GM12878 (cell line): ENCODE measurements at regions of chr11 and their contacts with region 1.

Region 1: DNA sequence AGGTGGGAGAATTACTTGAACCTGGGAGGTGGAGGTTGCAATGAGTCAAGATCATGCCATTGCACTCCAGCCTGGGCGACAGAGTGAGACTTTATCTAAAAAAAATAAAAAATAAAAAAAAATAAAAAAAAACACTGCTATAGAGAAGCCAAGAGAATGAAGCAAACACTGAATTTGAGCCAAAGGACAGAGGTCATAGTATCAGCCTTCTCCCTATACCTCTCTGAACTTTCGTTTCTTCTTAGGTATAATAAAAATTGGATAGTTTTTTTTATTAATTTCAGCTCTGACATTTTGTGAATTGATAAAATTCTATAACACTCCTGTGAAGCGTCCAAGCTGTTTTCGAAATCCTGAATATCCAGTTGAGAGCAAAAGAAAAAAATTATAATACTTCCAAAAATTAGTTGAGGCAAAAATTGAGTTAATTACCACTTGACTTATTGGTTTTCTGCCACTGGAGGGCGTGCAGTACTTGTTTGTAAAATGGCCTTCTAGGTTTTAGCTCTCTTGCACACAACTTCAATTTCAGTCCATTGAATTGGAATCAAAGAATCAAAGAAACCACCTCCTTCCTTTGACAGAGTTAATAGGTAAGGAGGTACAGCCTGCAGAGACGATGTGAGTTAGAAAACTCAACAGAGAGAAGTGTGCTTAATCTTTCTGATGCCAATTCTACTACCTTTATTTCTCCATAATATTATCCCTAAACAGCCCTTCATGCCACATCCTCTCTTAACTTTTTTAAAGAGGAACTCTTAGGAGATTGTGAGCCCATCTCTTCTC is 143.2 kb downstream of the BBOX1 start:
- DNase-seq: peak; percentile 12
- ATAC-seq: peak; percentile 80
- H3K4me3 ChIP-seq: no peak overlapping the region
- H3K27ac ChIP-seq: no peak overlapping the region
- H3K4me1 ChIP-seq: no peaks in the 10 kb centered on the region
- H3K27me3 ChIP-seq: no peaks in the 10 kb centered on the region
- CTCF ChIP-seq: peak; percentile 57 to 76 (median 59)
- EP300 ChIP-seq: no peak
- POLR2A ChIP-seq: no peak
- RAD21 ChIP-seq: peak; percentile 91

Region 2: DNA sequence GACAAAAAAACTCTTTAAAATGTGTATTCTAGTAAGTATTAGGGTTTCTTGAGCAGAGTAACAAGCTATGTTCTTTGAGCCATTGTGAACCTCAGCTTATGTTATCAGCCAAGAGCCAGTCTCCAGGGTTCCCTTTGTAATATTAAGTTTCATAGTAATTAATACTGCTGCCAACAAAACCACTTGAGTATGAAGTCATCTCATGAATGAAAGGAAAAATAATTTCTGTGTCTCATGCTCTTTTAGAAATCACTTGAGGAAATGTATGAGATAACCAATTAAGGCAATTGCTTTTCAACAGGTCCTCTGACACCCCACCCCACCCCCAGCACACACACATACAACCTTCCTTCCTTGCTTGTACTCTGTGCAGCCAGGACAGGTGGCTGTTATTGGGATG is 83.3 kb before region 1 on chr11:
- CTCF ChIA-PET with region 1: no interaction called
- POLR2A ChIA-PET with region 1: no interaction called
- RAD21 ChIA-PET with region 1: no interaction called
- SMC1A ChIA-PET with region 1: no interaction called
- in situ Hi-C with region 1: no loop called
- intact Hi-C with region 1: no loop called
- DNase-seq: no peak
- ATAC-seq: no peak
- H3K4me3 ChIP-seq: no peak overlapping the region
- H3K27ac ChIP-seq: no peak overlapping the region
- H3K4me1 ChIP-seq: no peaks in the 10 kb centered on the region
- H3K27me3 ChIP-seq: no peaks in the 10 kb centered on the region
- CTCF ChIP-seq: no peak
- EP300 ChIP-seq: no peak
- POLR2A ChIP-seq: no peak
- RAD21 ChIP-seq: no peak

Region 3: DNA sequence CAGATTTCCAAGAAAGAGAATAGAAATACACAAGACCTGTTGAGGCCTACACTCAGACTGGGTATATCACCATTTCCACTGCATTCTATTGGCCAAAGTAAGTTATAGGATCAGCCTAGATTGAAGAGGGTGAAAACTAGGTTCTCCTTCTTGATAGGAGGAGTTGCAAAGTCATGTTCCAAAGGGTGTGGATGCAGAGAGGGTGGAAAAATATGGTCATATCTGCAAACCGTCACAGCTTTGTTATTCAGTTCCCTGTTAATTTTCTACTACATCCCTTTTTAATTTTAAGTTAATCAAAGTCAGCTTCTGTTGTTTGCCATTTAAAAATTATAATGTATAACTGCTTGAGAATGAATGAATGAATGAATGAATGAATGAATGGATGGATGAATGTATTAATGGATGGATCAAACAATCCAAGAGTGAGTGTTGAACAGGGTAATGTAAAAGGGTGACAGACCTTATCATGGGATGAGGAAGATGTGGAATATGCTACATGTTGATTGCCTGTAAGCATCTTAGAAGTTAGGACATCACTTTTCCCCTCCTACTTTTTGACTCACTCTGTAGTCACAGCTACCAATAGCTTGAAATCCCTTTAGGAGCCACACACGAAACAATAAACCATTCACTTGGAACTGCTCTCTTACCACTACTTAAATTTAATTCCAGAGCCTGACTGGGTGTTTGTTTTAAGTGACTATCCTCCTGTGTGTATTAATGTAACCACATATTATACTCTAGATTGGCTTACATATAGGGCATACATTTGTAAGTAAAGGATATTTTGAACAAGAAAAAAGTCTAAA is 57.7 kb after region 1 on chr11:
- CTCF ChIA-PET with region 1: interaction called, 11 read pairs
- POLR2A ChIA-PET with region 1: no interaction called
- RAD21 ChIA-PET with region 1: interaction called, 3 read pairs
- SMC1A ChIA-PET with region 1: interaction called, 4 read pairs
- in situ Hi-C with region 1: no loop called
- intact Hi-C with region 1: loop called (anchors 10 kb)
- DNase-seq: no peak
- ATAC-seq: no peak
- H3K4me3 ChIP-seq: no peak overlapping the region
- H3K27ac ChIP-seq: no peak overlapping the region
- H3K4me1 ChIP-seq: no peaks in the 10 kb centered on the region
- H3K27me3 ChIP-seq: no peaks in the 10 kb centered on the region
- CTCF ChIP-seq: no peak
- EP300 ChIP-seq: no peak
- POLR2A ChIP-seq: no peak
- RAD21 ChIP-seq: no peak

Region 4: GRCh38 chr11:27362749-27363575 is 179.1 kb after region 1 on chr11 and contains the start of gene CCDC34:
- CTCF ChIA-PET with region 1: interaction called, 4 read pairs
- POLR2A ChIA-PET with region 1: no interaction called
- RAD21 ChIA-PET with region 1: interaction called, 3 read pairs
- SMC1A ChIA-PET with region 1: no interaction called
- in situ Hi-C with region 1: no loop called
- intact Hi-C with region 1: loop called (anchors 5 kb)
- DNase-seq: peak; percentile 48
- ATAC-seq: peak; percentile 99
- H3K4me3 ChIP-seq: peak within 1 kb of the TSS; percentile 81
- H3K27ac ChIP-seq: peak within 1 kb of the TSS; percentile 69
- H3K4me1 ChIP-seq: peaks cover 3% of the 10 kb centered on the region; the same call in 1 of the 2 replicates
- H3K27me3 ChIP-seq: no peaks in the 10 kb centered on the region
- CTCF ChIP-seq: no peak
- EP300 ChIP-seq: no peak
- POLR2A ChIP-seq: peak; percentile 78
- RAD21 ChIP-seq: no peak
- polyA plus RNA-seq, gene CCDC34: 6.2 to 13.4 TPM

Region 5: DNA sequence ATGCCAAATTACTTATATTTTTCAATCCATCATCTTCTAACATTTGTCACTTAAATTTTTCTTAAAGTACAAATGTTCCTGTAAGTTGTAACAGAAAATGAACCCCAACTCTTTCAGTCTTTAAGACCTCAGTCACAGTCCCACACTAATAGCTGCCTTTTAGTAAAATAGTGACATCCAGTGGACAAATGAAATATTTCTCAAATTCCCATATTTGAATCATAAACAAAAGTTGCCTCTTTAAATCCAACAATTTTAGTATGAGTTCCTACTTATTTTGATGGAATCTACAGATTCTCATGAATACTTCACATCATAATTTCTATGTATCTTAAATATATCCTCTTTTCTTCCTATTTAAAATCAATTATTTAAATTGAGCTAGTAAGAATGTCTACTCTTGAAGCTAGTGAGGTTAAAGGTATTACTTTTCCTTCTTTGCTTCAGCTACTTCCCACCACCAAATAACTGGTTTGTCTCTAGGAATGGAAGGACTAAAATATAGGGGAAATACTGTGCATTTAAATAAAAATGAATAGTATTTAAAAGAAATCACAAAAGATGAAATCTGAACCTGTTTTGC is 313.5 kb after region 1 on chr11:
- CTCF ChIA-PET with region 1: interaction called, 96 read pairs
- POLR2A ChIA-PET with region 1: no interaction called
- RAD21 ChIA-PET with region 1: interaction called, 36 read pairs
- SMC1A ChIA-PET with region 1: interaction called, 45 read pairs
- in situ Hi-C with region 1: loop called (anchors 5 kb)
- intact Hi-C with region 1: no loop called
- DNase-seq: no peak
- ATAC-seq: peak; percentile 86
- H3K4me3 ChIP-seq: no peak overlapping the region
- H3K27ac ChIP-seq: no peak overlapping the region
- H3K4me1 ChIP-seq: no peaks in the 10 kb centered on the region
- H3K27me3 ChIP-seq: no peaks in the 10 kb centered on the region
- CTCF ChIP-seq: peak; percentile 28 to 51 (median 30); a peak in 4 of 6 replicates
- EP300 ChIP-seq: no peak
- POLR2A ChIP-seq: no peak
- RAD21 ChIP-seq: peak; percentile 41; the same call in 1 of the 2 replicates